Activated CD4-positive, alpha-beta memory T cell treated with anti-CD3 and anti-CD28 coated beads, Interleukin-2, amount 10 ng/mL, durations not matched to agents 7 days and 5 days (primary cell): ENCODE measurements at regions of chr1 and their contacts with region 1.

Region 1: DNA sequence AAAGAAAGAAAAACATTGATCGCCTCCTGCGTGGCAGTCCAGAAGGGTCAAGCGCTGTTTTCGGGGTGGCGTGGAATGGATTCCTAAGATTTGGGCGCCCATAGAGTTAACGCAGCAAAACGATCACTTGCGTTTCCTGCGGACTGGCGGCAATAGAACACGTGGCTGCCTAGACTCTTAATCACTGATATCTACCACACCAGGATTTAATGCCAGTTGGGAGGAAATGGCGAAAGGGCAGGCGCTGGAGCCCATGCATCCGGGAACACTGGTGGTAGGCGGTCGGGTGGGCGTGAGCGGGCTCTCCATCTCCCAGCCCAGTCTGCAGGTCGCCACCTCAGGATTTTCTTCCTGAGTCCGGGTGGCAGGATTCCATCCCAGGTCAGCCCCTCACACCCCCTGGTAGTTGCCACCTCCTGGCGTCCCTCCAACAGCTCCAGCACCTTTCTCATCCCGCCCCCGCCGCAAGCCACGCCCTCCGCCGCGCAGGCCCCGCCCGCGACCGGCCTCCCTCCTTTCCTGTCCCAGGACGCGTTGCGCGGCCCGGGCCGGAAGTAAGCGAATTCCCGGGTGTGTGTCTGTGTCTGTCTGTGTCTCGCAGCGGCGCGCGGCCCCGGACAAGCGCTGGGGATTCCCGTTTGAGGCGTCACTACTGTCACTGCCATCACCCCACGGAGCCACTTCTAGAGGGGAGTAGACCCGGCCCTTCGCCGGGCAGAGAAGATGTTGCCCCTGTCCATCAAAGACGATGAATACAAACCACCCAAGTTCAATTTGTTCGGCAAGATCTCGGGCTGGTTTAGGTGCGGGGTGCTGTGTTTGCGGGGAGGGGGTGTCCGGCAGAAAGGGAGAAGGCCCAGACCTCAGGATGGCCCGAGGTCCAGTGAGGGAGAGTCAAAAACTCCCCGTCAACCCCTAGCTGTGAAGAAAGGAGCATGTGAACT is at the start of gene SLC30A7:
- DNase-seq: peak; percentile 94
- H3K4me3 Mint-ChIP-seq: peak within 1 kb of the TSS; percentile 89
- H3K27ac Mint-ChIP-seq: peak within 1 kb of the TSS; percentile 94
- H3K4me1 Mint-ChIP-seq: peaks cover 48% of the 10 kb centered on the region
- H3K27me3 Mint-ChIP-seq: no peaks in the 10 kb centered on the region
- total RNA-seq, gene SLC30A7: 38.9 to 42.7 TPM

Region 2: GRCh38 chr1:100883963-100884362 is 11.8 kb before region 1 on chr1:
- CTCF ChIA-PET with region 1: interaction called, 6 read pairs
- POLR2A ChIA-PET with region 1: interaction called, 11 read pairs
- DNase-seq: no peak
- H3K4me3 Mint-ChIP-seq: no peak overlapping the region
- H3K27ac Mint-ChIP-seq: no peak overlapping the region
- H3K4me1 Mint-ChIP-seq: no peaks in the 10 kb centered on the region
- H3K27me3 Mint-ChIP-seq: no peaks in the 10 kb centered on the region

Region 3: GRCh38 chr1:100972185-100972584 is 76.4 kb after region 1 on chr1:
- CTCF ChIA-PET with region 1: no interaction called
- POLR2A ChIA-PET with region 1: no interaction called
- DNase-seq: no peak
- H3K4me3 Mint-ChIP-seq: no peak overlapping the region
- H3K27ac Mint-ChIP-seq: no peak overlapping the region
- H3K4me1 Mint-ChIP-seq: peaks cover 8% of the 10 kb centered on the region
- H3K27me3 Mint-ChIP-seq: no peaks in the 10 kb centered on the region